AG04449 (cell line): ENCODE measurements at regions of chr1 and their contacts with region 1.

Region 1: GRCh38 chr1:204941421-204942338 is 71.0 kb downstream of the NFASC start:
- DNase-seq: no peak
- H3K4me3 ChIP-seq: no peak overlapping the region
- CTCF ChIP-seq: peak; percentile 78

Region 2: DNA sequence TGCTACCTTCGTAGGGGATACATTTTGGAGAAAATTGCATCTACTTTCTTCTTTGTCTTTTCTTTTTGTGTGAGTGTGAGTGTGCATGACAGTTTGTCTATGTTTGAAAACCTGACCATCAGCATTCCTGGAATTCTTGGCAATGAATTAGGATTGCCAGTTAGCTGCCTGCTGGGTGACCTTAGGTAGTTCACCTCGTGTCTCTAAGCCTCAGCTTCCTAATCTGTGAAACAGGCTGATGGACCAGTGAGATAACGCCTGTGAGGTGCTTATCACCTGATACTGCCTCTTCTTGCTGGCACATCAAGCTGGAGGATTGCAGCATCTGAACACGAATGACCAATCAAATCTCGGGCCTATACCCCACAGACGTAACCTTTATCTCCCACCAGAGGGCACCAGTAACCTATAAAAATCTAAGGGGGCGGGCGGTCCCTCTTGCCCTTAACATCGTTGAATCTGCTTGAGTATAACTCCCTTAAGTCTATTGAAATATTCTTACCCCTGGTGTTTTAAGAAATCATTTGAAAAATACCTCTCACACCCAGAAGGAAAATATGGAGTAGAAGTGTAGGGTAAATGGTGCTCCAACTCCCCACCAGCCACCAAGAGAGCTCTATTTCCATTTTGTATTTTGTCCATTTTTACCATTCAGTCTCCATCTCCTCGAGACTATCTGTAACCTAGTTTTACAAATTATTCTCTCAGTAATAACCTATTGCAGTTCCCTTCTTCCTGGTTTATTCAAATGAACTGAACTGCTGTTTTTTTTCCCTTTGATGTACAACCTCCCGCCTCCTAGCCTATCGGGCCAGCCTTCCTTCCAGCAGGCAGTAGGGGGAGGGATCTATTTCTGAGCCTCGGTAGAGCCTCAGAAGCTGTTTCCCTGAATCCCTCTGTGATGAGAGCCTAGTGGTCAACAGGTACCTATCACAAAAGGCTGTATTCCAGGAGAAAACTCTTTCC is 375.8 kb before region 1 on chr1:
- CTCF ChIA-PET with region 1: interaction called, 25 read pairs
- POLR2A ChIA-PET with region 1: no interaction called
- DNase-seq: no peak
- H3K4me3 ChIP-seq: no peak overlapping the region
- CTCF ChIP-seq: peak; percentile 54

Region 3: DNA sequence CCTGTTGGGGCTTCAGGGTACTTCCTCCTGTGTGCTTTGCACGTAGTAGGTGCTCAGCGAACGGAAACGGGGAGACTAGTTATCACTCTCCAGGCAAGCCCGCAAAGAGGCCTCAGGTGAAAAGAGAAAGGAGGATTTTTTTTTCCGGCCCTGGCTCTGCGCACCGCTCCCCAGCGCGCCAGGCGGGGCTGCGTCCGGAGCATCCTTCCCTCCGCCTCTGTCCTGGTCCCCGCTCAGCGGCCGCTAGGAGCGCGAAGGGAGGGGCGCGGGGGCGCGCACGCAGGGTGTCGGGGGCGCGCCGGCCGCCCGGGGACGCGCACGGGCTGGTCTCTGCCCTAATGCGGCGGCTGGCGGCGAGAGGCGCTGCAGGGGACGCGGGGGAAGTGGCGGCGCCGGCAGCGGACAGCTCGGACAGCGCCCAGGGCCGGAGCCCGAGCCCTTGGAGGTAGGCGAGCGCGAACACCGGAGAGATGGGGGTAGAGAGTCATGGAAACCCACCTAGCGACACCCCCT is 113.3 kb before region 1 on chr1:
- CTCF ChIA-PET with region 1: interaction called, 214 read pairs
- POLR2A ChIA-PET with region 1: no interaction called
- DNase-seq: no peak
- H3K4me3 ChIP-seq: peak overlapping the region; percentile 68
- CTCF ChIP-seq: peak; percentile 37

Region 4: GRCh38 chr1:204915861-204916495 is 25.7 kb before region 1 on chr1:
- CTCF ChIA-PET with region 1: interaction called, 10 read pairs
- POLR2A ChIA-PET with region 1: no interaction called
- DNase-seq: no peak
- H3K4me3 ChIP-seq: no peak overlapping the region
- CTCF ChIP-seq: no peak

Region 5: GRCh38 chr1:204961765-204962419 is 20.2 kb after region 1 on chr1:
- CTCF ChIA-PET with region 1: interaction called, 35 read pairs
- POLR2A ChIA-PET with region 1: no interaction called
- DNase-seq: no peak
- H3K4me3 ChIP-seq: no peak overlapping the region
- CTCF ChIP-seq: no peak

Region 6: DNA sequence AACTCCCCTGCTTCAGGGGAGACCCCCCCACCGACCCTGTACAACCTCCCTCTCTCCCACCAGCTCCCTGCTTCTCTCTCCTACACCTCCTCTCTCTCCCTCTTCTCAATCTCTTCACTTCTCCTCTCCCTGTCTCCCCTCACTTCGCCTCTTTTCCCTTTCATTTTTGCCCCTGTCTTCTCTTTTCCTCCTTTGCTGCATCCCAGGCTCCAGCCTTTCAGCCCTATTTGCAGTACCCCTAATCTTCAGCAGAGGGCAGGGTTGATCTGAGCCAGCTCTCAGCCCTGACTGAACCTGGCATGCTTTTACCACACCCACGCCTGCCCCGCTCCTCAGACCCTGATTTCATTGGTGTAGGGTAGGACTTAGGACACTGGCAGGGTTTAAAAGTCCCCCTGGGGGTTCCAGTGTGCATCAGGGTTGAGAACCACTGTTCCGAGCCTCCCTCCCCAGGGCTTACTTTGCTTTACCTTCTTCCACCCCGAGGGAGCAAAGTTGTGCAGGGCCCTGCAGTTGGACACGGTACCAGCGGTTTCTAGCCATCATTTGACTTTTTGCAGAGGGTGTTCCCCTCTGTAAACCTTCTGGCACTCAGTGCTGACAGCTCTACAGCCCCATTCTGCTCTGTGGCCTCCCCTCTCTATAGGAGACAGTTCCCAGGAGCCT is 34.0 kb after region 1 on chr1:
- CTCF ChIA-PET with region 1: interaction called, 32 read pairs
- POLR2A ChIA-PET with region 1: no interaction called
- DNase-seq: no peak
- H3K4me3 ChIP-seq: no peak overlapping the region
- CTCF ChIP-seq: peak; percentile 79